K562 (cell line): ENCODE measurements at regions of chr3 and their contacts with region 1.

Region 1: DNA sequence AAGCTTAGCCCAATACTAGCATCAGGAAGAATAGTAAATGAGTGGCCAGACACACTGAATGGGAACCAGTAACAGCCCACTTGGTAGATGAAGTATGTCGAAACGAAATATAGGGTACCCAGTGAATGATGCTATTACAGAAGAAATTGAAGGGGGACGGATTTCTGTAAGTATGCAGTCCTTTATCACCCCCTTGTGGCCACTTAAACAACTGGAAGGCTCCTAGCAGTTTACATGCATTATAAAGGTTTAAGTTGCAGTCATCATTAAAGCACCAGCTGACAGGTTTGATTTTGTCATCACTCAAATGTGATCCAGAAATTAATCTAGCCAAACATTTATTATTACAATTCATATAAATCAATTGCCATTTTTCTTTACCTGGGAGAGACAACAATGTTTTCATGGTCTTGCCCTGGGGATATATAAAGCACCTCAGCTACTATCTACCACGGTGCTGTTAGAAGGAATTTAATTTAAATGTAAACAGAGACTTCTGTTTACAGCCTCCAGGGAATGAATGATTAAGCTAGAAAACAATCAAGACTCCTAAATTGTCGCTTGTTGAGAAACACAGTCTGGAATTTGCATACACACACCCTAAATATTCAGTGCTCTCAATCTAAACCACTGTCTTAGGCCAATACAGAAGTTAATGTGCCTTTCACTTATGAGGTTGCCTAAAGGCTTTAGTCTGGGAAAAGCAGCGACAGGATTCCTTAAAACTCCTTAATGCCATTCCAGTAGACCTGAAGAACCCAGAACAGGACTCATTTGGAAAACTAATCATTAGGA is 7.8 kb downstream of the EIF1B start:
- DNase-seq: peak; percentile 68 to 81 (median 73)
- ATAC-seq: peak; percentile 62
- H3K4me3 ChIP-seq: no peak overlapping the region
- H3K27ac ChIP-seq: no peak overlapping the region
- H3K4me1 ChIP-seq: peaks cover 4 to 25% of the 10 kb centered on the region in 2 experiments
- H3K27me3 ChIP-seq: peaks cover 0 to 4% of the 10 kb centered on the region in 2 experiments; a peak in 1 of 5 replicates
- CTCF ChIP-seq: peak; percentile 82 to 96 (median 83)
- EP300 ChIP-seq: no peak
- POLR2A ChIP-seq: no peak
- RAD21 ChIP-seq: peak; percentile 97 to 99

Region 2: DNA sequence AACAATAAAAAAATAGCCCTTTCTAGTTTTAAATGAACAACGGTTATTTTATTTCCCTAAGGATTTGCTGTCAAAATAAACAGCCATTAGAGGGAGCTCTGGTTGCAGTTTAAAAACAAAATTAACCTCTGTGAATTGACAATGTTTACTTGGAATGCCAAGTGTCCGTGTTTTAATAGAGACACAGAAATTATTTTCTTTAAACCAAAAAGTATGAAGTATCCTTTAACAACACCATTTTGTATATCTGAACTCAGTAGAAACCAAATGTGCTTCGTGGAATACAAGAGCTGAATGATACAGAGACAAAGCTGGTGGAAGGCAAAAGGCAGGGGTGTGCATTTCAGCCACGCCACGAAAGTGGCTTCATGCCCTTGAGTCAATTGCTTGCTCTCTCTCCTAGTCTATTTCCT is 775.3 kb before region 1 on chr3:
- CTCF ChIA-PET with region 1: no interaction called
- POLR2A ChIA-PET with region 1: no interaction called
- in situ Hi-C with region 1: no loop called
- intact Hi-C with region 1: loop called (anchors 10 kb)
- DNase-seq: peak in 2 of 4 experiments; percentile 33 to 37
- ATAC-seq: peak; percentile 47; the same call in 2 of the 3 replicates
- H3K4me3 ChIP-seq: no peak overlapping the region
- H3K27ac ChIP-seq: no peak overlapping the region
- H3K4me1 ChIP-seq: no peaks in the 10 kb centered on the region
- H3K27me3 ChIP-seq: no peaks in the 10 kb centered on the region
- CTCF ChIP-seq: peak; percentile 51 to 86 (median 58); a peak in 4 of 6 replicates
- EP300 ChIP-seq: no peak
- POLR2A ChIP-seq: no peak
- RAD21 ChIP-seq: peak; percentile 87 to 92

Region 3: GRCh38 chr3:39812537-39812936 is 504.7 kb before region 1 on chr3:
- CTCF ChIA-PET with region 1: no interaction called
- POLR2A ChIA-PET with region 1: no interaction called
- in situ Hi-C with region 1: no loop called
- intact Hi-C with region 1: loop called (anchors 10 kb)
- DNase-seq: peak in 1 of 4 experiments; percentile 12
- ATAC-seq: no peak
- H3K4me3 ChIP-seq: no peak overlapping the region
- H3K27ac ChIP-seq: no peak overlapping the region
- H3K4me1 ChIP-seq: peaks cover 0 to 15% of the 10 kb centered on the region in 2 experiments; a peak in 2 of 5 replicates
- H3K27me3 ChIP-seq: peaks cover 2 to 29% of the 10 kb centered on the region in 2 experiments; a peak in 3 of 5 replicates
- CTCF ChIP-seq: peak in 2 of 3 experiments; percentile 44 to 47; a peak in 4 of 6 replicates
- EP300 ChIP-seq: no peak
- POLR2A ChIP-seq: no peak
- RAD21 ChIP-seq: peak in 1 of 2 experiments; percentile 30; a peak in 2 of 4 replicates

Region 4: DNA sequence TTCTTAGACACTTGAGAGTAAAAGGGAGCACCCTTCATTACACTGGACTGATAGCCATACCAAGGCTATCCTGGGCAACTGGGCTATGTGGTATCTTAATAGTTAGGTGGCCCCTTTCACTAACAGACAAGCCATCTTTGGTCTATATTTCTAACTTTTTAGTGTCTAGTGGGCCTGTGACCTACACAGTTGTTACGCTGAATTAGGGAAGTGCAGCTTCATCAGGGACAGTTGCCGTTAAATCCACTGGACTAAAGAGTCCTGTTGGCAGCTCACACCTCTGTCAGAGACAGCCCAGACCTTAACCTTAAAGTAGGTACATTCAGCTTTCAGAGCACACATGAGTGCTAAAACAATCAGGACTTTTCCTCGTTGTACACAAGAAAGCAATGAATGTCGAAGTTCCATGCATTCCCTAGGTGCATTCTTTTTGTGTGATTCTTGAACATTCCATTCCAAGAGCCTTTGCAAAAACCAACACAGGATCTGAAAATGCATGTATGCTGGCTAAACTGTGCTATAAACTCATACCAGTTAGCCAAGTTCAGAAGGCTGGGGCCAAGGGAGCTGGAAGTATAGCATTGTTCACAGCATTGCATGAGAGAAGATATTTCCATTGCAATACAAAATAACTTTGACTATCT is 237.9 kb before region 1 on chr3:
- CTCF ChIA-PET with region 1: no interaction called
- POLR2A ChIA-PET with region 1: no interaction called
- in situ Hi-C with region 1: no loop called
- intact Hi-C with region 1: loop called (anchors 10 kb)
- DNase-seq: no peak
- ATAC-seq: no peak
- H3K4me3 ChIP-seq: no peak overlapping the region
- H3K27ac ChIP-seq: no peak overlapping the region
- H3K4me1 ChIP-seq: peaks cover 0 to 4% of the 10 kb centered on the region in 2 experiments; a peak in 1 of 5 replicates
- H3K27me3 ChIP-seq: peaks cover 2 to 8% of the 10 kb centered on the region in 2 experiments; a peak in 3 of 5 replicates
- CTCF ChIP-seq: no peak
- EP300 ChIP-seq: no peak
- POLR2A ChIP-seq: no peak
- RAD21 ChIP-seq: no peak

Region 5: DNA sequence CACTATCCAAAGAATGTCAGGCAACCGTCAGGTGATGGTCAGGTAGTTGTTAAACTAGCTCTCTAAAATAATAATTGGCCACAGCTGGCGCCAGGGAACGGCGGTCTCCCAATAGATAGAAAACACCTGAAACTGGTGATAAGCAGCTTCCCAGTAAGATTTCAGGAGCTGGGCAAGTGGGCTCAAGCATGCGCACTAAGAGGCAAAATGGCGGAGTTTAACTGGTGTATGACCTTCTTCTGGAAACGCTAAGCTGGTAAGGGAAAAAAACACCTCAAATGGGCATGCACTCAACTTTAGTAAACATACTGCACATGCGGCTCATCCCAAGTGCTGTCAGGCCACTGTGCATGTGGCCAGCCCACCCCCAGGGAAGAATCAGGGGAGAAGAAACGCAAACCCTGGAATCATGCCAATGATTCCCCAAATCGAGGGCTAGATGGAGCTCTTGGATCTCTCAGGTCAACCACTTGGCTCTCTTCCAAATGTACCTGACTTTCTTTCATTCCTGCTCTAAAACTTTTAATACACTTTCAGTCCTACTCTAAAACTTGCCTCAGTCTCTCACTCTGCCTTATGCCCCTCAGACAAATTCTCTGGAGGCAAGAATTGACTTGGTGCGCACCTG is 402.5 kb after region 1 on chr3:
- CTCF ChIA-PET with region 1: no interaction called
- POLR2A ChIA-PET with region 1: no interaction called
- in situ Hi-C with region 1: no loop called
- intact Hi-C with region 1: loop called (anchors 10 kb)
- DNase-seq: peak; percentile 42 to 71 (median 46)
- ATAC-seq: peak; percentile 69
- H3K4me3 ChIP-seq: no peak overlapping the region
- H3K27ac ChIP-seq: no peak overlapping the region
- H3K4me1 ChIP-seq: no peaks in the 10 kb centered on the region
- H3K27me3 ChIP-seq: peaks cover 0 to 6% of the 10 kb centered on the region in 2 experiments; a peak in 1 of 5 replicates
- CTCF ChIP-seq: peak; percentile 23 to 57 (median 51); a peak in 4 of 6 replicates
- EP300 ChIP-seq: no peak
- POLR2A ChIP-seq: no peak
- RAD21 ChIP-seq: peak; percentile 49 to 67; a peak in 3 of 4 replicates